CD4-positive, alpha-beta T cell (primary cell): ENCODE measurements at regions of chr4 and their contacts with region 1.

Region 1: GRCh38 chr4:147866532-147867271 is 134.8 kb downstream of the ARHGAP10 start:
- DNase-seq: peak; percentile 83 to 97 (median 92)
- ATAC-seq: peak; percentile 99
- H3K4me3 ChIP-seq: no peak overlapping the region
- H3K4me3 Mint-ChIP-seq: no peak overlapping the region
- H3K27ac ChIP-seq: no peak overlapping the region
- H3K27ac Mint-ChIP-seq: no peak overlapping the region
- H3K4me1 ChIP-seq: no peaks in the 10 kb centered on the region
- H3K4me1 Mint-ChIP-seq: no peaks in the 10 kb centered on the region
- H3K27me3 ChIP-seq: no peaks in the 10 kb centered on the region
- H3K27me3 Mint-ChIP-seq: no peaks in the 10 kb centered on the region
- CTCF ChIP-seq: peak; percentile 100

Region 2: DNA sequence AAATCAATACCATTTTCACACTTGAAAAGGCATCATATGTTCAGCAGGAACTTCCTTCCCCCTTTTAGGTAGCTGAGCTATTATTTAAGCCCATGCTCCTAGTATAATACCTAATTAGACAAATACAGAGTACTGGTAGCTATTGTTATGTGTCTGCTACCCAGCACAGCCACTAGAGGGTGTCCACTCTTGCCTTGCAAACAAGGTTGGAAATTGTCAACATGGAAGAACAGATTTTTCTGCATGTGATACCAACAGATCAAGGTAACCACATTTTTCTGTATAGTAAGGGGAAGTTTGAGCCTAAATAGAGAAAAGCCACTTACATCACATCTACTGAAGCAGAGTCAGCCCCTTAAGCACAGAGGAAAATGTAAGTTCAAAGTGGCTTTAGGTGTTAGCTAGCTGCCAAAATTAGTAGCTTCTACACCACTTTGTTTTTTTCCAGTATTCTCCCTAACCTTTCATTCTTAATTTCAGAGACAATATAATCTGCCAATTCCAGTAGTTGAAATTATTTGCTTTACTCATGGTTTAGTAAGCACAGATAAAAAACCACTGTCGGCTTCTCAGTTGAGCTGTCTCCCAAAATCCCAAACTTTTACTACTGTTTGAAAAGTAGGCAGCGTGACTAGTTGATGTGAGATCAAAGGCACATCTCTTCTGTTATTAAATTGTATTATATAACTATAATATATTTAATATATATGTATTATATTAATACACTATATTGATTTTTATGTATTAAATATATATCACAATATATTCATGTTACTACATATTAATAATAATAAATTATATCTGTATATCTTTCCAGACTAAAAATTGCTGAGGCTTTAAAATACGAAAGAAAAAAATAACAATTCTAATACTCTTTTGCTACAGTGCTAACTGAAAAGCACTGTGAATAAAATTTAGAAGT is 347.6 kb before region 1 on chr4:
- CTCF ChIA-PET with region 1: interaction called, 16 read pairs
- POLR2A ChIA-PET with region 1: interaction called, 4 read pairs
- intact Hi-C with region 1: loop called in 1 of 2 experiments (anchors 2 kb)
- DNase-seq: peak in 11 of 14 experiments; percentile 5 to 65 (median 28)
- ATAC-seq: peak; percentile 68
- H3K4me3 ChIP-seq: no peak overlapping the region
- H3K4me3 Mint-ChIP-seq: no peak overlapping the region
- H3K27ac ChIP-seq: no peak overlapping the region
- H3K27ac Mint-ChIP-seq: no peak overlapping the region
- H3K4me1 ChIP-seq: no peaks in the 10 kb centered on the region
- H3K4me1 Mint-ChIP-seq: no peaks in the 10 kb centered on the region
- H3K27me3 ChIP-seq: no peaks in the 10 kb centered on the region
- H3K27me3 Mint-ChIP-seq: peaks cover 25% of the 10 kb centered on the region
- CTCF ChIP-seq: peak; percentile 70

Region 3: DNA sequence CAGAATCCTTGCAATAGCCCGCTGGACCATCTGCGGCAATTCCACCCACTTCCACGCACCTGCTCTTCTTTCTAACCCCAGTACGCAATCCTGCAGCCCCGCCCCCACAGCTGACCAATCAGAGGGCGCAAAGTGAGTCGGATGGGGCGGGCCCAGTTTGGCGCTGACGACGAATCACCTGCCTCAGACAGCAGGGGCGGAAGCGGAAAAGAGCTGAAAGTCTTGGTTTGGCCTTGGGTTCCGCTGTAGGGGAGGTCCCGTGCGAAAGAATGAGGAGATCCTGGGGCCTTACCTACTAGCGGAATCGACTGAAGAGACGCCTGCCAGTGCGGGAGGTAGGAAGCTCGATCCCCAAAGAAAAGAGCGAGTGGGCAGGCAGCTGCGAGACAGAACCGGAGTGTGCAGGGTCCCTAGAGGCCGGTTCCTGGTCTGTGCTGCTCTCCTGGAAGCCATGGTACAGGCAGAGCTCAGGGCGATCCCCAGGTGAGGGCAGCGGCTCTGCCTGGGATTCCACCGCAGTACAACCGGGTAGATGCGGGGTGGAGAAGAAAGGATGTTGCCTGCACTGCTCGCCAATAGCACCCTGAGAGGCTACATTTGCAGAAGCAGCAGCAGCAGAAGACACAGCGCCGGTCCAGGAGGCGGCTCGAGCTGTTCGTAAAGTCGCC is 249.4 kb before region 1 on chr4 and contains the start of gene TMEM184C:
- CTCF ChIA-PET with region 1: interaction called, 20 read pairs
- POLR2A ChIA-PET with region 1: interaction called, 8 read pairs
- intact Hi-C with region 1: no loop called
- DNase-seq: peak; percentile 96 to 99 (median 98)
- ATAC-seq: peak; percentile 95
- H3K4me3 ChIP-seq: peak within 1 kb of the TSS; percentile 78
- H3K4me3 Mint-ChIP-seq: peak within 1 kb of the TSS; percentile 89
- H3K27ac ChIP-seq: peak within 1 kb of the TSS; percentile 80 to 90
- H3K27ac Mint-ChIP-seq: peak within 1 kb of the TSS; percentile 92
- H3K4me1 ChIP-seq: peaks cover 29% of the 10 kb centered on the region
- H3K4me1 Mint-ChIP-seq: peaks cover 38% of the 10 kb centered on the region
- H3K27me3 ChIP-seq: no peaks in the 10 kb centered on the region
- H3K27me3 Mint-ChIP-seq: no peaks in the 10 kb centered on the region
- CTCF ChIP-seq: no peak
- total RNA-seq, gene TMEM184C: 10.0 to 10.1 TPM

Region 4: GRCh38 chr4:147731580-147732517 is 134.9 kb before region 1 on chr4 and contains the start of gene ARHGAP10:
- CTCF ChIA-PET with region 1: interaction called, 19 read pairs
- POLR2A ChIA-PET with region 1: interaction called, 8 read pairs
- intact Hi-C with region 1: no loop called
- DNase-seq: peak; percentile 36 to 84 (median 62)
- ATAC-seq: peak; percentile 63
- H3K4me3 ChIP-seq: peak within 1 kb of the TSS; percentile 83
- H3K4me3 Mint-ChIP-seq: peak within 1 kb of the TSS; percentile 98
- H3K27ac ChIP-seq: peak within 1 kb of the TSS in 1 of 2 donors; percentile 65
- H3K27ac Mint-ChIP-seq: peak within 1 kb of the TSS; percentile 88
- H3K4me1 ChIP-seq: peaks cover 28% of the 10 kb centered on the region
- H3K4me1 Mint-ChIP-seq: peaks cover 37% of the 10 kb centered on the region
- H3K27me3 ChIP-seq: no peaks in the 10 kb centered on the region
- H3K27me3 Mint-ChIP-seq: no peaks in the 10 kb centered on the region
- CTCF ChIP-seq: no peak
- total RNA-seq, gene ARHGAP10: 5.6 to 5.7 TPM

Region 5: DNA sequence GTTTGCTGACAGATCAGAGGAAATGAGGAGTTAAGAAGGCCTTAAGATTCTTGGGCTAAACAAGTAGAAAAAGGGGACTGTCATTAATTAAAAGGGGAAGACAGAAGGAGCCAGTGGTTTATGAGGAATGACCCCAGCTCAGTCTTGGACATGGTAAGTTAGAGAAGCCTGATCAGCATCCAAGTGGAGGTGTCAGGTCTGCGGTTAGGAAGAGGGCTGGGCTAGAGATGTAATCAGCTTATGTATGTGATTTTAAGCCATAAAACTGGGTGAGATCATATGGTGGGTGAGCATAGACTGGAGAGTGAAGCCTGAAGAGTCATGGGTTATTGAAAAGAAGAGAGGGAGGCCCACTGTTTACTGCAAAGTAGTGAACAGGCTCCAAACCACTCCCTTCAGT is 329.5 kb after region 1 on chr4:
- CTCF ChIA-PET with region 1: no interaction called
- POLR2A ChIA-PET with region 1: no interaction called
- intact Hi-C with region 1: no loop called
- DNase-seq: no peak
- ATAC-seq: no peak
- H3K4me3 ChIP-seq: no peak overlapping the region
- H3K4me3 Mint-ChIP-seq: no peak overlapping the region
- H3K27ac ChIP-seq: no peak overlapping the region
- H3K27ac Mint-ChIP-seq: no peak overlapping the region
- H3K4me1 ChIP-seq: no peaks in the 10 kb centered on the region
- H3K4me1 Mint-ChIP-seq: peaks cover 11% of the 10 kb centered on the region
- H3K27me3 ChIP-seq: no peaks in the 10 kb centered on the region
- H3K27me3 Mint-ChIP-seq: no peaks in the 10 kb centered on the region
- CTCF ChIP-seq: no peak